Dendritic cell treated with granulocyte-macrophage colony-stimulating factor and Interleukin-4, amounts not matched to agents 40 ng/mL and 50 ng/mL, for 4 days (primary cell): ENCODE measurements at regions of chr9 and their contacts with region 1.

Region 1: GRCh38 chr9:127884427-127884911 is 7.0 kb upstream of the AK1 start:
- H3K4me3 Mint-ChIP-seq: no peak overlapping the region
- H3K27ac Mint-ChIP-seq: no peak overlapping the region
- H3K4me1 Mint-ChIP-seq: peaks cover 31% of the 10 kb centered on the region
- H3K27me3 Mint-ChIP-seq: peaks cover 3% of the 10 kb centered on the region

Region 2: GRCh38 chr9:127916665-127917613 is 32.5 kb after region 1 on chr9 and contains the start of gene ST6GALNAC4:
- intact Hi-C with region 1: loop called (anchors 5 kb)
- H3K4me3 Mint-ChIP-seq: peak within 1 kb of the TSS; percentile 86
- H3K27ac Mint-ChIP-seq: peak within 1 kb of the TSS; percentile 86
- H3K4me1 Mint-ChIP-seq: peaks cover 77% of the 10 kb centered on the region
- H3K27me3 Mint-ChIP-seq: peaks cover 6% of the 10 kb centered on the region